K562 (cell line): ENCODE measurements at regions of chr9 and their contacts with region 1.

Region 1: DNA sequence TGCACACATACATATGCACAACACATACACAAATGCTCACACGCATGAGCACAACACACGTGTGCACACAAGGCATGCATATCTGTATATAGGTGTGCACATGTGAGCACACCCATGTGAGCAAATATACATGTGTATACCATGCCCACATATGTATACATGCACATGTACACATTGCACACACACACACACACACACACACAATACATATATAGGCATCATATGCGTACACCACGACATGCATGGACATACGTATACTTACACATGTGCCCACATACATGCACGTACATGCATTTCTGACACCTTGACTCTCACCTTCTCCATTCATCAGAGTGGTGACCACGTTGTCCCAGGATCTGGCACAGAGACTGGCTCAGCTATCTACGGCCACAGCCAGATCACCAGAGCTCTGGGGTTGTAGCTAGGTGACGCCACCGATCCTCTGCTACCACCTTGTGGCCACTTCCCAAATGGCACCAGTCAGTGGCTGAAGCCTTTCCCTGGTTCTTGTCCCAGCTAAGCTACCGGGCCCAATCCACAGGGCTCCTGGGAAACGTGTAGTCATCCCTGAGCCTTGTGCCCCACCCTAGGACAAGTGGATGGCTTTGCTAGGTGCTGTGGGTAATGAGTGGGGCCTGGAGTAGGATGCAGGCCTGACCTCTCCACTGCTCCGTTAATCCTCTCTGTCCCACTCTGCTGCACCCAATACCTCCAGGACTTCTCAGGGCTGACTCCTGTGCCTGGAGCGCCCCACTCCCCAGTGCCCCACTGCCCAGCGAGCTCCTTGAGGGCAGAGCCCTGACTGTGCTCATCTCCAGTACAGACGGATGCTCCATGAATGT is 194.4 kb downstream of the RGS3 start:
- DNase-seq: peak; percentile 82 to 89 (median 85)
- ATAC-seq: peak; percentile 96
- H3K4me3 ChIP-seq: no peak overlapping the region
- H3K27ac ChIP-seq: no peak overlapping the region; the same call in 2 of the 3 replicates
- H3K4me1 ChIP-seq: peaks cover 0 to 6% of the 10 kb centered on the region in 2 experiments; a peak in 2 of 5 replicates
- H3K27me3 ChIP-seq: peaks cover 12 to 34% of the 10 kb centered on the region in 2 experiments
- CTCF ChIP-seq: peak; percentile 92 to 96 (median 94)
- EP300 ChIP-seq: no peak
- POLR2A ChIP-seq: no peak
- RAD21 ChIP-seq: peak; percentile 94 to 95

Region 2: DNA sequence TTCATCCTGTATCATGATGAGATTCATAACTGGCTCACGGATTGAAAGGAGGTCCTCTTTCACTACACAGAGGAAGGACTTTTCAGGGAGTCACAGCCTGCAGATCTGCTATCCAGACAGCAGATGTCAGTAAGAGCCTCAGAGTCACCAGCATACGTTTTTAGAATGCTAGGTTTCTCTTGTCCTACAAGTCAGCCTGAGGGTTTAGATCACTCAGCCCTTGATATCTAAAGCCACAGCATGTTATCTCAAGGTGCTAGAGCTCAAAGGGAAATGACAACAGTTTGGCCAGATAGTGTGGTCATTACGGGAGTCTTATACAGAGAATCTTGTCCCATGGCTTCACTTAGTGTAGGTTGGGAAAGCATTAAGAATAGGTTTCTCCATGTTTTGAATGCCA is 736.4 kb before region 1 on chr9:
- CTCF ChIA-PET with region 1: no interaction called
- POLR2A ChIA-PET with region 1: no interaction called
- in situ Hi-C with region 1: no loop called
- intact Hi-C with region 1: loop called (anchors 5 kb)
- DNase-seq: peak in 3 of 4 experiments; percentile 11 to 40 (median 21)
- ATAC-seq: peak; percentile 85
- H3K4me3 ChIP-seq: no peak overlapping the region
- H3K27ac ChIP-seq: no peak overlapping the region
- H3K4me1 ChIP-seq: no peaks in the 10 kb centered on the region; a peak in 1 of 5 replicates
- H3K27me3 ChIP-seq: no peaks in the 10 kb centered on the region
- CTCF ChIP-seq: peak; percentile 65 to 76 (median 71)
- EP300 ChIP-seq: no peak
- POLR2A ChIP-seq: no peak
- RAD21 ChIP-seq: peak; percentile 72 to 78

Region 3: GRCh38 chr9:113309204-113309813 is 348.6 kb before region 1 on chr9:
- CTCF ChIA-PET with region 1: interaction called, 4 read pairs
- POLR2A ChIA-PET with region 1: no interaction called
- in situ Hi-C with region 1: loop called (anchors 10 kb)
- intact Hi-C with region 1: loop called (anchors 10 kb)
- DNase-seq: peak; percentile 31 to 63 (median 34)
- ATAC-seq: peak; percentile 83
- H3K4me3 ChIP-seq: no peak overlapping the region
- H3K27ac ChIP-seq: no peak overlapping the region
- H3K4me1 ChIP-seq: no peaks in the 10 kb centered on the region; a peak in 1 of 5 replicates
- H3K27me3 ChIP-seq: peaks cover 6 to 18% of the 10 kb centered on the region in 2 experiments; a peak in 4 of 5 replicates
- CTCF ChIP-seq: peak; percentile 57 to 90 (median 62); a peak in 5 of 6 replicates
- EP300 ChIP-seq: no peak
- POLR2A ChIP-seq: no peak
- RAD21 ChIP-seq: peak; percentile 91 to 92

Region 4: GRCh38 chr9:113446323-113446740 is 211.6 kb before region 1 on chr9:
- CTCF ChIA-PET with region 1: interaction called, 21 read pairs
- POLR2A ChIA-PET with region 1: interaction called, 3 read pairs
- in situ Hi-C with region 1: loop called (anchors 5 kb)
- intact Hi-C with region 1: loop called (anchors 2 kb)
- DNase-seq: peak; percentile 31 to 52 (median 44)
- ATAC-seq: peak; percentile 74
- H3K4me3 ChIP-seq: no peak overlapping the region
- H3K27ac ChIP-seq: no peak overlapping the region
- H3K4me1 ChIP-seq: no peaks in the 10 kb centered on the region
- H3K27me3 ChIP-seq: no peaks in the 10 kb centered on the region; a peak in 1 of 5 replicates
- CTCF ChIP-seq: peak; percentile 40 to 83 (median 53); a peak in 4 of 6 replicates
- EP300 ChIP-seq: no peak
- POLR2A ChIP-seq: no peak
- RAD21 ChIP-seq: peak; percentile 95 to 96

Region 5: GRCh38 chr9:113602126-113603044 is 55.5 kb before region 1 on chr9:
- CTCF ChIA-PET with region 1: interaction called, 4 read pairs
- POLR2A ChIA-PET with region 1: no interaction called
- in situ Hi-C with region 1: loop called (anchors 5 kb)
- intact Hi-C with region 1: no loop called
- DNase-seq: peak; percentile 84 to 90 (median 86)
- ATAC-seq: peak; percentile 89
- H3K4me3 ChIP-seq: no peak overlapping the region
- H3K27ac ChIP-seq: no peak overlapping the region
- H3K4me1 ChIP-seq: peaks cover 9 to 10% of the 10 kb centered on the region in 2 experiments
- H3K27me3 ChIP-seq: peaks cover 3 to 8% of the 10 kb centered on the region in 2 experiments; a peak in 2 of 5 replicates
- CTCF ChIP-seq: no peak
- EP300 ChIP-seq: no peak
- POLR2A ChIP-seq: no peak
- RAD21 ChIP-seq: no peak

Region 6: GRCh38 chr9:113737517-113738271 is 79.8 kb after region 1 on chr9:
- CTCF ChIA-PET with region 1: no interaction called
- POLR2A ChIA-PET with region 1: no interaction called
- in situ Hi-C with region 1: no loop called
- intact Hi-C with region 1: no loop called
- DNase-seq: peak; percentile 54 to 70 (median 64)
- ATAC-seq: peak; percentile 92
- H3K4me3 ChIP-seq: no peak overlapping the region
- H3K27ac ChIP-seq: no peak overlapping the region
- H3K4me1 ChIP-seq: no peaks in the 10 kb centered on the region
- H3K27me3 ChIP-seq: peaks cover 3 to 4% of the 10 kb centered on the region in 2 experiments; a peak in 3 of 5 replicates
- CTCF ChIP-seq: peak; percentile 81 to 85 (median 81)
- EP300 ChIP-seq: no peak
- POLR2A ChIP-seq: no peak
- RAD21 ChIP-seq: peak; percentile 58 to 77